Heart left ventricle (tissue), 16 donors: ENCODE measurements at regions of chr17 and their contacts with region 1.

Region 1: DNA sequence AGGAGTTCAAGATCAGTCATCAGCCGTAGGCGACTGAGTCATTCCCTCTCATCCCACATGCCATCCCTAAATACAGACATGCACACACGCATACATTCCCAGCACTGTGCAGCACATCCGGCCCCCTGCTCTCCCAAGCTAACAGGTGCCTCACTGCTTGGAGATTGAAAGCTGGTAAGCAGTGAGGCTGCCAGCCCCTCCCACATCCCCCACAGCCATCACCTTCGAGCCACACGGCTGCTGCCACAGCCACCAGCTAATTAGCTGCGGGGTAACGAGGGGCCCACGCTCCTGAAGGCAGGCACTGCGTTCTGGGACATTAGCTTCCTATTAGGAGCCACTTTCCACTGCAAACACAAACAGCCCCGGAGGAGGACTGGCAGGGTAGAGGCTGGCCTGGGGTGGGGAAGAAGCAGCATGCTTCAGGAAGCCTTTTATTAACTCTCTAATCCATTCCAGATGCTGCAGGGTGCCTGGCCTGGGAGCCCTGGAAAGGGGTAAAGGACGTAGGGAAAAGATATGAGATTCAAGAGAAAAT is 179.6 kb downstream of the CCT6B start:
- DNase-seq: no peak
- ATAC-seq: no peak
- H3K4me3 ChIP-seq: no peak overlapping the region
- H3K27ac ChIP-seq: no peak overlapping the region
- H3K4me1 ChIP-seq: no peaks in the 10 kb centered on the region
- H3K27me3 ChIP-seq: peaks cover 0 to 4% (median 0%) of the 10 kb centered on the region in 9 donors
- CTCF ChIP-seq: no peak
- POLR2A ChIP-seq: no peak

Region 2: DNA sequence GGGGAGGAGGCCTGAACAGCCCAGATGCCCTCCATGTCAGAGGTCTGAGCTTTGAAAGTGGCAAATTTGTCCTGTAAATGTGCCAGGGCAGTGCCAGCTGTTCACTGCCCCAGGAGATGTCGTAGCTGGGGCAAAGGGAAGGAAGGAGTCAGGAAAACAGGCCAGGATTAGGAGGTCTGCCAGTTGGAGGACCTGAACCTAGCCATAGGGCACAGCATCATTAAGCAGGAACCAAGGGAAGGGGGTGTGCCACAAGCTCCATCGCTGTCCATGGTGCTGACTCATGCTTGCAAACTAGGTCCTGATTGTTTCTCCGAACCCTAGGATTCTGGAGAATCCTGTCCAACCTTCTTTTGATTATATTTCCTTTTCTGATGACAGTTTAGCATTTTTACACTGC is 78.1 kb before region 1 on chr17:
- intact Hi-C with region 1: no loop called
- DNase-seq: peak in 3 of 5 donors; percentile 21 to 41 (median 25)
- ATAC-seq: no peak
- H3K4me3 ChIP-seq: no peak overlapping the region
- H3K27ac ChIP-seq: no peak overlapping the region
- H3K4me1 ChIP-seq: no peaks in the 10 kb centered on the region
- H3K27me3 ChIP-seq: peaks cover 0 to 12% (median 0%) of the 10 kb centered on the region in 9 donors
- CTCF ChIP-seq: no peak
- POLR2A ChIP-seq: no peak

Region 3: GRCh38 chr17:34840750-34841149 is 59.1 kb after region 1 on chr17:
- intact Hi-C with region 1: loop called in 1 of 10 experiments (anchors 10 kb)
- DNase-seq: no peak
- ATAC-seq: no peak
- H3K4me3 ChIP-seq: no peak overlapping the region
- H3K27ac ChIP-seq: no peak overlapping the region
- H3K4me1 ChIP-seq: no peaks in the 10 kb centered on the region
- H3K27me3 ChIP-seq: peaks cover 0 to 2% (median 0%) of the 10 kb centered on the region in 9 donors
- CTCF ChIP-seq: no peak
- POLR2A ChIP-seq: no peak

Region 4: DNA sequence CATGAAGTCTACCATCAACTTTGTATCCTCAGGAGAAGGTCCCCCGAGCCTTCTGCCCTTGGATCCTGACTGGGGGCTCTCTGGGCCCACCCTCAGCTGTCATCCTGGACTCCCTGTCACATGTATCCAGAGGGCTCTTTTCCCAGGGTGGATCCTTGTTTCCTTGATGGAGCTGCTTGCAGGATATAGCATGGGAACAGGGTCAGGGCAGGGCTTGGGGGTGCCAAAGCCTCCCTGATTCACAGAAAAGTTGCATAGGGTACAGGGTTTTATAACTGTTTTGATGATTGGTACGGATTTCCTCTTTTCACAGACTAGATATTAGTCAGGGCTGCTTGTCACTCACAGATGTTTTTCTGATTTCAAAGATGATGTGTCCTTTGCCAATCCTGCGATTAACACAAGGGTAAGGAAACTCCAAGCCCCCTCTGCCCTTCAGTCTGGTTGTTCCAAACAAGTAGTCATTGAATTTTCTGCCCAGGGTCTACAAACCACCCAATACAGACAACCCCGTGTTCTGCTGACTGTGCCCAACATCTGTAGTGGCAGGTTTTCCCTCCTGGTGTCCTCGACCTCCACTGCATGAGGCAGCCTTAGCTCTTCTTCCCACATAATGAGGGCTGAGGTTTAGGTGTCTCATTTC is 433.1 kb after region 1 on chr17:
- intact Hi-C with region 1: no loop called
- DNase-seq: no peak
- ATAC-seq: peak in 1 of 4 donors; percentile 52
- H3K4me3 ChIP-seq: no peak overlapping the region
- H3K27ac ChIP-seq: peak overlapping the region in 9 of 12 donors; percentile 26 to 78 (median 62)
- H3K4me1 ChIP-seq: peaks cover 0 to 59% (median 12%) of the 10 kb centered on the region in 12 donors
- H3K27me3 ChIP-seq: no peaks in the 10 kb centered on the region
- CTCF ChIP-seq: no peak
- POLR2A ChIP-seq: no peak